IMR-90 (cell line): ENCODE measurements at regions of chr21 and their contacts with region 1.

Region 1: GRCh38 chr21:38525454-38525853 is 27.2 kb upstream of the ERG start:
- DNase-seq: no peak
- ATAC-seq: no peak
- H3K4me3 ChIP-seq: no peak overlapping the region
- H3K27ac ChIP-seq: no peak overlapping the region
- H3K4me1 ChIP-seq: no peaks in the 10 kb centered on the region
- H3K27me3 ChIP-seq: peaks cover 27% of the 10 kb centered on the region
- CTCF ChIP-seq: no peak
- POLR2A ChIP-seq: no peak
- RAD21 ChIP-seq: no peak

Region 2: DNA sequence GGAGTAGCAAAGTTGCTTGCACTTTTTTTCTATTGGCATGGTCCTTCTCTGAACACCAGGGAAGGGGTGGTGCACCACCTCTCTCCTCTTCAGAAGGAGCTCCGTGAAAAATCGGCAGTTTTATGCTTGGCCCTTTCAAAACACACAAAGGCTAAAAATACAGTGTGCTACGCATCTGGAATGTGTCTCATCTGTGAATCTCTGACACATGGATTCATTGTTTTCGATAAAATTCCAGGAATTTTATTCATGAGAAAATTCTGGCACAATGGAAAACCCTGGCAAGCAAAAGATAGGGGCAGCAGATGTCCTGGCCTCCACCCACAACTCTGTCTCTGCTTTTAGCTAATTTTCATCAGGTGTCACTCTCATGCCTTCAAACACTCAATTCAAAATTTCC is 70.1 kb before region 1 on chr21:
- CTCF ChIA-PET with region 1: no interaction called
- POLR2A ChIA-PET with region 1: no interaction called
- dilution Hi-C with region 1: no loop called
- in situ Hi-C with region 1: no loop called
- intact Hi-C with region 1: no loop called
- DNase-seq: no peak
- ATAC-seq: no peak
- H3K4me3 ChIP-seq: no peak overlapping the region
- H3K27ac ChIP-seq: no peak overlapping the region
- H3K4me1 ChIP-seq: no peaks in the 10 kb centered on the region
- H3K27me3 ChIP-seq: peaks cover 9% of the 10 kb centered on the region
- CTCF ChIP-seq: no peak
- POLR2A ChIP-seq: no peak
- RAD21 ChIP-seq: no peak

Region 3: GRCh38 chr21:38712071-38712470 is 186.6 kb after region 1 on chr21:
- CTCF ChIA-PET with region 1: no interaction called
- POLR2A ChIA-PET with region 1: no interaction called
- dilution Hi-C with region 1: no loop called
- in situ Hi-C with region 1: loop called (anchors 10 kb)
- intact Hi-C with region 1: no loop called
- DNase-seq: peak; percentile 27
- ATAC-seq: peak; percentile 40; the same call in 1 of the 2 replicates
- H3K4me3 ChIP-seq: no peak overlapping the region
- H3K27ac ChIP-seq: no peak overlapping the region
- H3K4me1 ChIP-seq: no peaks in the 10 kb centered on the region
- H3K27me3 ChIP-seq: peaks cover 36% of the 10 kb centered on the region
- CTCF ChIP-seq: peak; percentile 39
- POLR2A ChIP-seq: no peak
- RAD21 ChIP-seq: peak; percentile 28; the same call in 1 of the 2 replicates